ENCODE measurements at regions of chr16 and their contacts with region 1.

Region 1: GRCh38 chr16:30378236-30379204 is 3.8 kb downstream of the SEPTIN1 start:
- DNase-seq: peak; percentile 94 to 99
- H3K4me3 ChIP-seq: peak overlapping the region; percentile 54
- H3K4me1 ChIP-seq: peaks cover 10% of the 10 kb centered on the region
- H3K27me3 ChIP-seq: no peaks in the 10 kb centered on the region

Region 2: DNA sequence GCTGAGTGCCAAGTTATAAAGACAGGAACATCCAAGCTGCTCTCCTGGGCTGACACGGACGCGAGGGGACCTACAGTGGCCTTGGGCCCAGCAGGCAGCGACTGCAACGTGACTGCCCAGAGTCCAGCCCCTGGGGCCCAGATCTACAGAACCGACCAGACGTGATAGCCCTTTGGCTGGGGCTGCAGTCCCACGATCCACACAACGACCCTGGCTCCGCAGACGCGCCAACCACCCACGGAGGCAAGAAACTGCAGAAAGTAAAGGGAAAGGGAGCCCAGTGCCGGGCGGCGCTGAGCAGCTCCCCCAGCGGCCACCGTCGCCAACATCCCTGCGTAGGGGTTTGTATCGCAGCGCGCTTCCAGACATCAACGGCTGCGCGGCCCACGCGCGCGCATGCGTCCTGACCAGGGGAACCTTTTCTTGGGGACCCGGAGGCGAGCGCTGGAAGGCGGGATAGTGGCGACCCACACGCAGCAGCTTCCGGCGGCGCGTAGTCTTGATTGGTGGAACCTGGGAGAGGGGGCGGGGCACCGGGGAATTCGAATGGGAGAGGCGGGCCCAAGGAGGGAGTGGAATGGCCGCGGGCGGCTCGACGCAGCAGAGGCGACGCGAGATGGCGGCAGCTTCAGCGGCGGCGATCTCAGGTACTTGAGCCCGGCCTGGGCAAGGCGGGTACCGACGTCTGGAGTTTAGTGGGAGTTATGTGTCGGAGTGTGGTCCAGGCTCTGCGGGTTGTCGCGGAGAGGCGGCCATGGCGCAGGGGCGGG is 588.2 kb before region 1 on chr16 and contains the start of gene KIF22:
- in situ Hi-C with region 1: no loop called
- DNase-seq: peak; percentile 97 to 100
- H3K4me3 ChIP-seq: peak within 1 kb of the TSS; percentile 81
- H3K4me1 ChIP-seq: peaks cover 11% of the 10 kb centered on the region
- H3K27me3 ChIP-seq: no peaks in the 10 kb centered on the region

Region 3: DNA sequence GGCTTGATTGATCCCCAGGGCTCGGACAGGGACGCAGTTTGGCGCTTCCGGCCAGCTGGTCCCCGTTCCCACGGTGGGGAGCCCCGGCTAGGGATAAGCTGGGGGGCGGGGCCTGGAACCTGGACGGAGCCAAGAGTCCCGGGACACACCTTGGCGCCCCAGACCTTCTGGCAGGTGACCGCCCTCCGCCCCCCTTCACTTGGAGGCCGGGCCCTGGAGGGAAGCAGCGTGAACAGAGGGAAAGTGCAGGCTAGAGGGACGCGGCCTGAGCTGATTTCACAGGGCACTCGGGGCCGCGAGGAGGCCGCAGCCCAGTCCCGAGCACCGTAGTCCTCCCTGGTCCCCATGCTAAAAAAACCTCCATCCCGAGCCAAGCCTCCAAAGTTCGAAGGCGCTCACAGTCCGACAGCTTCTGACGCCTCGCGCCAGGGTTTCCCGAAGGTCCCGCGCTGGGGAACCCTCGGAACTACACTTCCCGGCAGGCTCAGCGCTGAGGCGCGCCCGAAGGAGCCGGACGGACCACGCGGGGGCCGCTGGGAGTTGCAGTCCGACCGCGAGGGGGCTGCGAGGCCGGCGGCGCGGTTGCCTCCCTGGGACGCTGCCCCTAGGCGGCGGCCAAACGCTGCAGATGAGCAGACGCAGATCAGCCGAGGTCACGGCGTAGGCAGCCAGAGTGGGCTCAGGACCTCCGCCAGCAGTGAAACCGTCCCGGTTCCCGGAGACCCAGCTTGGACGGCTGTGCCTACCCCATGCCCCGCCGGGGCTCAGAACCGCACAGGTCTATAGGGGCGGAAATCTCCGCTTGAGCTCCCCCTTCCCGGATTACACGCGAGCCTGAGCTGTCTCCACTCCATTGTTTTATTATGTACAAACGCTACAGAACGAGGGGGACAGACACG is 286.8 kb before region 1 on chr16 and contains the start of gene TBX6:
- in situ Hi-C with region 1: loop called (anchors 25 kb)
- DNase-seq: peak; percentile 92 to 95
- H3K4me3 ChIP-seq: peak within 1 kb of the TSS; percentile 40
- H3K4me1 ChIP-seq: peaks cover 18% of the 10 kb centered on the region
- H3K27me3 ChIP-seq: no peaks in the 10 kb centered on the region

Region 4: GRCh38 chr16:30922960-30923535 is 544.5 kb after region 1 on chr16:
- in situ Hi-C with region 1: loop called (anchors 25 kb)
- DNase-seq: peak; percentile 100
- H3K4me3 ChIP-seq: peak overlapping the region; percentile 51
- H3K4me1 ChIP-seq: no peaks in the 10 kb centered on the region; the same call in 1 of the 2 replicates
- H3K27me3 ChIP-seq: no peaks in the 10 kb centered on the region

Measured in HAP-1 (cell line).